Dorsolateral prefrontal cortex (tissue), 120 donors: ENCODE measurements at regions of chr1 and their contacts with region 1.

Region 1: GRCh38 chr1:154558575-154559465 is at the start of gene UBE2Q1:
- DNase-seq: peak; percentile 98 to 99 (median 99)
- H3K4me3 ChIP-seq: peak within 1 kb of the TSS; percentile 70 to 99 (median 92)
- H3K27ac ChIP-seq: peak within 1 kb of the TSS; percentile 85 to 98 (median 96)
- H3K27me3 ChIP-seq: no peaks in the 10 kb centered on the region
- CTCF ChIP-seq: no peak
- total RNA-seq, gene UBE2Q1: 55.7 to 144 (median 103) TPM

Region 2: GRCh38 chr1:154324669-154325582 is 233.9 kb before region 1 on chr1 and contains the start of gene ATP8B2:
- intact Hi-C with region 1: loop called in 1 of 2 experiments (anchors 10 kb)
- DNase-seq: peak; percentile 62 to 88 (median 72)
- H3K4me3 ChIP-seq: peak within 1 kb of the TSS; percentile 63 to 89 (median 77)
- H3K27ac ChIP-seq: peak within 1 kb of the TSS in 58 of 59 donors; percentile 74 to 96 (median 89)
- H3K27me3 ChIP-seq: no peaks in the 10 kb centered on the region
- CTCF ChIP-seq: peak; percentile 55 to 95 (median 88)
- total RNA-seq, gene ATP8B2: 28.2 to 80.0 (median 45.7) TPM

Region 3: DNA sequence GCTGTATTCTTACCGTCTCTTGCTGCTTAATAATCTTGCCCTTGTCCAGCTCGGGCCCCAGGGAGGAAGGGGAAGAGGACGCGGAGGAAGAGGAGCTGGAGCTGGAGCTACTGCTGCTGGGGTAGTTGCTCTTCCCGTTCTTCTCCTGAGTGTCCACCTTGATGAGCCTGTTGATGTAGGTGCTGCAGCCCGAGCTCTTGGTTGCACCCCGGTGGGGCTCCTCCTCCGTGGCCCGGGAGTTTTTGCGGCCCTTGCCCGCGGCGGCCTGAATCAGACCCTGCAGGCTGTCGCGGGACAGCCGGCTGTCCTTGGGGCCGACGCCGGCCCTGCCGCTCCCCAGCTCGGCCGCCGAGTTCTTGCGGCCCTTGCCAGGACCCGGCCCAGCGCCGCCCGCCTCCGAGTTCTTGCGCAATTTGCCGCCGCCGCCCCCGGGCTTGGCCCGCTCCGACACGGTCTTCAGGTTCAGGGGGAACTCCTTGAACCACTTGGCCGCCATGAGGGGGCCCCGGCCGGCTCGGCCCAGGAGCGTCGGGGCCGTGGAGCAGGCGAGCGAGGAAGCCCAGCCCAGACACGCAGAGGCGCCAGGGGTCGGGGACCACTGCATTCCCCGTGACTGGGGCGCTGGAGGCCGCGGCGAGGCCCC is 57.3 kb before region 1 on chr1:
- intact Hi-C with region 1: no loop called
- DNase-seq: no peak
- H3K4me3 ChIP-seq: peak overlapping the region in 58 of 59 donors; percentile 9 to 64 (median 46)
- H3K27ac ChIP-seq: peak overlapping the region in 17 of 59 donors; percentile 16 to 71 (median 36)
- H3K27me3 ChIP-seq: peaks cover 0 to 63% (median 38%) of the 10 kb centered on the region in 45 donors
- CTCF ChIP-seq: no peak

Region 4: DNA sequence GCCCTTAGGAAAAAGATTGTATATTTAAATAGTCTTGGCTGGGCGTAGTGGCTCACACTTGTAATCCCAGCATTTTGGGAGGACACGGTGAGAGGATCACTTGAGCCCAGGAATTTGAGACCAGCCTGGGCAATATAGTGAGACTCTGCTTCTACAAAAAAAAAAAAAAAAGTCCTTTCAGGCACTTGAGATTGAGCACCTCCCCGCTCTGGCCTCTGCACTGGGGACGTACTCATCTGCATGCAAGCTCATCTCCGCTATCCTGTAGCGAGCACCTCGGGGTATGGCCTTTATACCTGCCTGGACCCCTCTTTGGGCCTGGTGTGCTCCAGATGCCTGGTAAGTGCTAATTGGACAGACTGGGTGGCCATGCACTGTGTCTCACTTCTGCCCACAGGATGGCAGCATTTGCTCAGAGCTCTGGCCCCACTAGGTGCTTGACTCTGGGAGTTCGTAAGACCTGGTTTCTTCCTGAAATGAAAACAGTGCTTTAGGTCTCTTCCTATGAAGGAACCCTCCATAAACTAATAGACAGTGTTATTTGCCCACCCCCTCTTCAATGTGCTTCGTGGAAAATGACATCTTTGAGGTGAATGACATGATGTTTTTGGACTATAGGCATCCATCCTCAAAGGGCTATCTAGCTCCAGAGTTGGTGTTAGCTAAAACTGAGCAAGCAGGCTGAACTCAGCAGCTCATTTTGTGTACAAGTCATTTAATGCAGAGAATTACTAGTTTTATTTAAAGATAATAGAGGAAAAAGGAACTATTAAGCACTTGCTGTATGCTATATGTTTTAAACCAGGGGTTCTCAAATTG is 110.9 kb after region 1 on chr1:
- intact Hi-C with region 1: loop called in 1 of 2 experiments (anchors 5 kb)
- DNase-seq: peak; percentile 54 to 85 (median 80)
- H3K4me3 ChIP-seq: no peak overlapping the region
- H3K27ac ChIP-seq: no peak overlapping the region
- H3K27me3 ChIP-seq: no peaks in the 10 kb centered on the region
- CTCF ChIP-seq: peak; percentile 37 to 91 (median 78)

Region 5: GRCh38 chr1:154714638-154715037 is 155.8 kb after region 1 on chr1:
- intact Hi-C with region 1: no loop called
- DNase-seq: no peak
- H3K4me3 ChIP-seq: no peak overlapping the region
- H3K27ac ChIP-seq: no peak overlapping the region
- H3K27me3 ChIP-seq: no peaks in the 10 kb centered on the region
- CTCF ChIP-seq: no peak

Region 6: GRCh38 chr1:154878371-154879022 is 319.7 kb after region 1 on chr1:
- intact Hi-C with region 1: loop called (anchors 1 to 5 kb)
- DNase-seq: peak; percentile 78 to 90 (median 82)
- H3K4me3 ChIP-seq: peak overlapping the region in 26 of 59 donors; percentile 6 to 47 (median 32)
- H3K27ac ChIP-seq: no peak overlapping the region
- H3K27me3 ChIP-seq: no peaks in the 10 kb centered on the region
- CTCF ChIP-seq: peak; percentile 54 to 97 (median 92)

Region 7: DNA sequence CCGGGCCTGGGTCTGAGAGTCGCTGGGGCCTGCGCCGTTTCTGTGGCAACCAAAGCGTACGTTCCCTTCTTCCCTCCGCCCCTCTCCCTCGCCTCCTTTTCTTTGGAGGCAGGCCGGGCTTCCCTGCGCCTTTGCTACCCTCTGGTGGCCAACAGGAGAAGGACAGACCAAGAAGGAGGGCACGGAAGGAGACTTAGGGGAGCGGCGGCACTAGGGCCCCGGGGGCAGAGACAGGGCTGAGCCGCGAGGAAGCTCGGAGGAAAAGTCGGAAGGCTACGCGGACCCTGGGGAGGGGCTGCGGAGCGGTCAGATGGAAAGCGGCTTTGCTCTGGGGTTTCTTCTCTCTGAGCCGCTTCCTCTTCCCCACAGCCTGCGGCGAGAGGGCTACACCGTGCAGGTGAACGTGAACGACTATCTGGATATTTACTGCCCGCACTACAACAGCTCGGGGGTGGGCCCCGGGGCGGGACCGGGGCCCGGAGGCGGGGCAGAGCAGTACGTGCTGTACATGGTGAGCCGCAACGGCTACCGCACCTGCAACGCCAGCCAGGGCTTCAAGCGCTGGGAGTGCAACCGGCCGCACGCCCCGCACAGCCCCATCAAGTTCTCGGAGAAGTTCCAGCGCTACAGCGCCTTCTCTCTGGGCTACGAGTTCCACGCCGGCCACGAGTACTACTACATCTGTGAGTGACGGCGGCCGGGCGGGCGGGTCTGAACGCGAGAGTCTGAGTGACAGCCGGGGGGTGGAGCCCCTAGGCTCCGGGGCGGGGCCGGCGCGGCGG is 526.1 kb after region 1 on chr1:
- intact Hi-C with region 1: loop called in 1 of 2 experiments (anchors 1 kb)
- DNase-seq: peak; percentile 87 to 96 (median 94)
- H3K4me3 ChIP-seq: peak overlapping the region; percentile 49 to 91 (median 75)
- H3K27ac ChIP-seq: peak overlapping the region in 58 of 59 donors; percentile 59 to 96 (median 90)
- H3K27me3 ChIP-seq: peaks cover 0 to 45% (median 30%) of the 10 kb centered on the region in 45 donors
- CTCF ChIP-seq: peak; percentile 80 to 98 (median 91)